GM10248 (cell line): ENCODE measurements at regions of chr18 and their contacts with region 1.

Region 1: DNA sequence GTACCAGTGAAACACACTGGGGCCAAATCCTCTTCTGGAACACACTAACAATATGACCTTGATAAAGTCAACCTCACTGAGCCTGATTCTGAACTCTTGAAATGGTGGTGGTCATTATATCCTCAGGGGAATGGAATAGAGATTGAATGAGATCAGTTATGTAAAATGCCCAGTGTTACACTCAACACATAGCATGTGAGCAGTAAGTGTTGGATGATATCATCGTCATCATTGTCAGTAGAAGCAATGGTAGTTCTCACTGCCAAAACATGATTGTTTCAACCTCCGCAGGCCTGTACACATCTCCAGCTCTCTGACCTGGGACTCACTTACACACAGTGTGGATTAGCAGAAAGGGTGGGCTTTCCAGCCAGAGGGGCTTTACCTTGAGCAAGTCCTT is 5.5 kb upstream of the ST8SIA3 start:
- DNase-seq: no peak
- CTCF ChIP-seq: no peak

Region 2: GRCh38 chr18:57334383-57334782 is 12.5 kb before region 1 on chr18:
- CTCF ChIA-PET with region 1: interaction called, 10 read pairs
- POLR2A ChIA-PET with region 1: no interaction called
- DNase-seq: no peak
- CTCF ChIP-seq: no peak

Region 3: GRCh38 chr18:57376503-57376902 is 29.6 kb after region 1 on chr18:
- CTCF ChIA-PET with region 1: no interaction called
- POLR2A ChIA-PET with region 1: no interaction called
- DNase-seq: no peak
- CTCF ChIP-seq: no peak

Region 4: DNA sequence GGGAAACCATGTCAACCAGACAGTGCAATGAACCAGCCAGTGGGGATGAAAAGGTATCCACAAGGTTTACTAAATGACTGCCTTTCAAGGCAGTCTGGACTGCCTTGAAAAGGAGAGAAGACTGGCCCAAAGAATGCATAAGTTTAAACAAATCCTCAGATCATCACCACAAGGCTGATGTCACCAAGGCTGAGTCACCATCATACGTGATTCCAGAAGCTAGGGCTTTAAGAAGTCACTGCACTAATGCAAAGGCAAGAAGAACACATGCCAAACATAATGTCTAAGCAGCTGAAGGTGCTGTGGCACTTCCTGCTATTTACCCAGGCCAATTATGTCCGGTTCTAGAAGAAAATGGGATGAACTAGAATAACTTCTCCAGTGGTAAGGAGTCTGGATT is 50.6 kb after region 1 on chr18:
- CTCF ChIA-PET with region 1: no interaction called
- POLR2A ChIA-PET with region 1: no interaction called
- DNase-seq: no peak
- CTCF ChIP-seq: no peak